A673 (cell line): ENCODE measurements at regions of chr1 and their contacts with region 1.

Region 1: GRCh38 chr1:227437495-227438008 is 119.3 kb upstream of the CDC42BPA start:
- DNase-seq: peak; percentile 79
- H3K4me3 ChIP-seq: peak overlapping the region; percentile 23
- H3K27ac ChIP-seq: no peak overlapping the region
- H3K4me1 ChIP-seq: peaks cover 7% of the 10 kb centered on the region
- H3K27me3 ChIP-seq: no peaks in the 10 kb centered on the region
- CTCF ChIP-seq: peak; percentile 66

Region 2: DNA sequence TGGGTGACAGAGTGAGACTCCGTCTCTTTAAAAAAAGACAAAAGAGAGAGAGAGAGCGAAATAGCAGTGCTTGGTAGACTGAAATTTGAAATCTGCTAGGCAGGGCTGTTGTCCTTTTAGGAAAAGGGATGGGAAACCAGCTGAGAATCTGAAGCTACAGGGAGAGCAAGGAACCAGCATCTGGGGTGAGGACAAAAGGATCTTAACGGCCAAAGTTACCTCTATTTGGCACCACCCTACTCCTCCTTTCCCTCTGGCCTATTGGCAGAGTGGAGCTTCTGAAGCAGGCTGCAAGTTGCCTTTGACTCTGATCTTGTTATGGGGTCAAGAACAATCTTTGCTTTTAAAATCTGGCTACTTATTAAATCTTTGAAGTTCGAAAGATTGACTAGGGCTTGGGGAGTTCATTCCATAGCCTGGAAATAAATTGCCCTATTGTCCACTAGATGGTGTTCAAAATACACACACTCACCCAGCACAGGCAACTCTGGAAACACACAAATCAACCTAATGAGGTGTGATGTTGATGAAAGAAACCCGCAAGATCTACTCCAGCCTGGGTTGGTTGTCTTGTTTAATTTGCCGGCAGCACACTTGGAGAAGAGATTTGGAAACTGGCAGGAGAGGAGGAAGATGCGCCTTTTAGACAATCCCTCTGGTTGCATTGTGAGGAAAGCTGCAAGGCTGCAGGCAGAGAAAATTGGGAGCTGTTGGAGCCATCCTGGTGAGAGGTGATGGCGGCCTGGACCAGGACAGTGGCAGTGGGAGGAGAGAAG is 1013.1 kb before region 1 on chr1:
- CTCF ChIA-PET with region 1: no interaction called
- POLR2A ChIA-PET with region 1: no interaction called
- intact Hi-C with region 1: loop called (anchors 5 kb)
- DNase-seq: peak; percentile 74
- H3K4me3 ChIP-seq: no peak overlapping the region
- H3K27ac ChIP-seq: no peak overlapping the region
- H3K4me1 ChIP-seq: peaks cover 12% of the 10 kb centered on the region
- H3K27me3 ChIP-seq: no peaks in the 10 kb centered on the region
- CTCF ChIP-seq: peak; percentile 76

Region 3: DNA sequence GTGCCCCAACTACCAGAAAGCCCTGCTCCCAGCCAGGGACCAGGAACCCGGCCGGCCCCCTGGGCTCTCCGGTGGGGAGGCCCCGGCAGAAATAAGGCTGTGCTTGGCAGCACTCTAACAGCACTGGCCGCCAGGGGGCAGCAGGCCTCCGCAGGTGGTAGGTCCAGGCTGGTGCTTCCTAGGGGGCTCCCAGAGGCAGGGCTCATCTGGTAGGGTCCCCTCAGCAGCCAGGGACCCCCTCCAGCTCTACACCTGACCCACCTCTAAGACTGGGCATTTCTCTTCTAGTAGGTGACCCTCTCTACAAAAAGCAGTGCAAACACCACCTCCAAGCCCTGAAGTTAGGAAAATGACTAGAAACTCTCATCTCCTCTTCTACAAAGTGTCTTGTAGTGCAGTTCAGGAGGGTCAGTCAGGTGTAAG is 803.4 kb before region 1 on chr1:
- CTCF ChIA-PET with region 1: no interaction called
- POLR2A ChIA-PET with region 1: no interaction called
- intact Hi-C with region 1: loop called (anchors 5 kb)
- DNase-seq: peak; percentile 69
- H3K4me3 ChIP-seq: no peak overlapping the region
- H3K27ac ChIP-seq: no peak overlapping the region
- H3K4me1 ChIP-seq: no peaks in the 10 kb centered on the region
- H3K27me3 ChIP-seq: no peaks in the 10 kb centered on the region
- CTCF ChIP-seq: peak; percentile 95

Region 4: GRCh38 chr1:226827968-226828513 is 609.5 kb before region 1 on chr1:
- CTCF ChIA-PET with region 1: interaction called, 3 read pairs
- POLR2A ChIA-PET with region 1: no interaction called
- intact Hi-C with region 1: loop called (anchors 5 kb)
- DNase-seq: peak; percentile 95
- H3K4me3 ChIP-seq: no peak overlapping the region
- H3K27ac ChIP-seq: peak overlapping the region; percentile 76
- H3K4me1 ChIP-seq: peaks cover 6% of the 10 kb centered on the region
- H3K27me3 ChIP-seq: no peaks in the 10 kb centered on the region
- CTCF ChIP-seq: peak; percentile 97

Region 5: GRCh38 chr1:227127891-227128290 is 309.7 kb before region 1 on chr1:
- CTCF ChIA-PET with region 1: no interaction called
- POLR2A ChIA-PET with region 1: no interaction called
- intact Hi-C with region 1: loop called (anchors 2 kb)
- DNase-seq: no peak
- H3K4me3 ChIP-seq: no peak overlapping the region
- H3K27ac ChIP-seq: no peak overlapping the region
- H3K4me1 ChIP-seq: no peaks in the 10 kb centered on the region
- H3K27me3 ChIP-seq: no peaks in the 10 kb centered on the region
- CTCF ChIP-seq: no peak

Region 6: GRCh38 chr1:227234998-227235405 is 202.6 kb before region 1 on chr1:
- CTCF ChIA-PET with region 1: no interaction called
- POLR2A ChIA-PET with region 1: no interaction called
- intact Hi-C with region 1: loop called (anchors 1 kb)
- DNase-seq: peak; percentile 90
- H3K4me3 ChIP-seq: no peak overlapping the region
- H3K27ac ChIP-seq: no peak overlapping the region
- H3K4me1 ChIP-seq: no peaks in the 10 kb centered on the region
- H3K27me3 ChIP-seq: no peaks in the 10 kb centered on the region
- CTCF ChIP-seq: peak; percentile 84

Region 7: DNA sequence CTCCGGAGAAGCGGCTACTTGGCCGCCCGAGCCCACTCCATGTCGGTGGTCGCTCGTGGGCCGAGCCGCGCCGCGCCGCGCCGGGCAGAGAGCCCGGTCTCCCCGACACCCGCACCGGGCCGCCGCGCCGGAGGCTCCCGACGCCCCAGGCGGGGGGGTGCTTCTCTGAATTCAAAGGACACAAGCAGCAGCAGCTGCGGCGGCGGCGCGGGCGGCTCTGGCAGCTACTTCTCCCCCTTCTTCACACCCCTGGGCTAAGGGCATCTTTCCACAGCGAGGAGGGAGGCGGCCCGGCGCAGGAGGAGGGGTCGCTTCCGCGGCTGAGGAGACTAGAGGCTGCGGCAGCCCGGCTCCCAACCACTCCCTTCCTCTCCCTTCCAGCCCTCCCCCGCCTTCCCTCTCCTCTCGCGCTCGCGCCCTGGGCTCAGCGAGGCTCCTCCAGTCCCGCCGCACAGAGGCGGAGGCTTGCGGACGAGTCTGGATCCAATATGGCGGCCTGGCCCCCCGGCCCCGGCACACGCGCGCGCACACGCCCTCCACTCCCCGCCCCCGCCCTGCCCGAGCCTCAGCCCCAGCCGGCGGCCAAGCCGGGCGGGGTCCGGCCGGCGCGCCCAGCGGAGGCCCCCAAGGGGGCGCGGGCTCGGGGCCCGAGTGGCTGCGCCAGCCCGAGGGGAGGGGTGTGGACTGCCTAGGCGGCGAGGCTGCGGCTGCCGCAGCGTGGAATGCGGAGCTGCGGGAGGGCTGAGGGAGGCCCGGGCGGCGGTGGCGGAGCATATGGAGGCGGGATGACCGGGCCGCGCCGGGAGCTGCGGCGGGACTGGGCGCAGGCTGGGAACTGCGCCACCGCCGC is 119.3 kb before region 1 on chr1 and contains the start of gene CDC42BPA:
- CTCF ChIA-PET with region 1: no interaction called
- POLR2A ChIA-PET with region 1: no interaction called
- intact Hi-C with region 1: loop called (anchors 10 kb)
- DNase-seq: peak; percentile 96
- H3K4me3 ChIP-seq: peak within 1 kb of the TSS; percentile 90
- H3K27ac ChIP-seq: peak within 1 kb of the TSS; percentile 92
- H3K4me1 ChIP-seq: peaks cover 11% of the 10 kb centered on the region
- H3K27me3 ChIP-seq: peaks cover 21% of the 10 kb centered on the region
- CTCF ChIP-seq: no peak
- total RNA-seq, gene CDC42BPA: 21.0 and 21.7 TPM in 2 replicates

Region 8: GRCh38 chr1:228045871-228046270 is 608.3 kb after region 1 on chr1:
- CTCF ChIA-PET with region 1: no interaction called
- POLR2A ChIA-PET with region 1: no interaction called
- intact Hi-C with region 1: no loop called
- DNase-seq: no peak
- H3K4me3 ChIP-seq: no peak overlapping the region
- H3K27ac ChIP-seq: no peak overlapping the region
- H3K4me1 ChIP-seq: no peaks in the 10 kb centered on the region
- H3K27me3 ChIP-seq: peaks cover 51% of the 10 kb centered on the region
- CTCF ChIP-seq: no peak